Naive thymus-derived CD4-positive, alpha-beta T cell (primary cell): ENCODE measurements at regions of chr13 and their contacts with region 1.

Region 1: DNA sequence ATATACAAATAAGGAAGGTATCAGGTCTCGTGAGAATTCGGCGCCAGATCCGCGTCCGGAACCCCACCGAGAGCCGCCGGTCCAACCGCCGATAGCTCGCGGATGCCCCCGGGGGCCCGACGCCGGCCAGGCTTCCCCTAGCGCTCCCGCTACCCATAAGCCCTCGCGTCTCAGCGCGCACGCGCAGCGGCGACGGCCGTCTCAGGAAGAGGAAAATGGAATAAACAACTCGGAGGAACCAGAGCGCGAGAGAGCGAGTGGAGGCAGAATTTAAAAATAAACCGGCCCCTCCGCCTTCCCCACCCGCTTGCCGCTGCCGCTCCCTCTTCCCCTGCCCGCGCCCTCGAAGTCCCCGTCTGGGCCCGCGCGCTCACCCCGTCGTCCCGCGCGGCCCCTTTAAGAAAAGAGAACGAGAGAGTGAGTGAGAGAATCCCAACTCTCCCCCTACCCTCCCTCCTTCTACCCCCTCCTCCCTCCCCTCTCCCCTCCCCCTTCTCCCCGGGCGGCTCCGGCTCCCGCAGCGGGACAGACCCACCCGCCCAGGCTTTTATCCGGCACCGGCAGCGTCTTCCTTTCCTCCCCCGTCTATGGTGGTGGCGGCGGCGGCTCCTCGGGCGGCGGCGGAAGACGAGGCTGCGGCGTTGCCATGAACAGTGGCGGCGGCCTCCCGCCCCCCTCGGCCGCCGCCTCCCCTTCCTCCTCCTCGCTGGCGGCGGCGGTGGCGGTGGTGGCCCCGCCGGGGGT is at the start of gene PAN3:
- DNase-seq: peak; percentile 88 to 92 (median 91)
- ATAC-seq: peak; percentile 73
- H3K4me3 ChIP-seq: peak within 1 kb of the TSS; percentile 56
- H3K4me3 Mint-ChIP-seq: peak within 1 kb of the TSS; percentile 90 to 99 (median 96)
- H3K27ac ChIP-seq: peak within 1 kb of the TSS; percentile 99
- H3K27ac Mint-ChIP-seq: peak within 1 kb of the TSS; percentile 96 to 99 (median 98)
- H3K4me1 ChIP-seq: peaks cover 24% of the 10 kb centered on the region in 2 donors
- H3K4me1 Mint-ChIP-seq: peaks cover 43 to 52% (median 47%) of the 10 kb centered on the region in 7 donors
- H3K27me3 ChIP-seq: no peaks in the 10 kb centered on the region
- H3K27me3 Mint-ChIP-seq: peaks cover 0 to 2% (median 0%) of the 10 kb centered on the region in 5 donors
- total RNA-seq, gene PAN3: 49.9 to 82.5 (median 76.4) TPM

Region 2: DNA sequence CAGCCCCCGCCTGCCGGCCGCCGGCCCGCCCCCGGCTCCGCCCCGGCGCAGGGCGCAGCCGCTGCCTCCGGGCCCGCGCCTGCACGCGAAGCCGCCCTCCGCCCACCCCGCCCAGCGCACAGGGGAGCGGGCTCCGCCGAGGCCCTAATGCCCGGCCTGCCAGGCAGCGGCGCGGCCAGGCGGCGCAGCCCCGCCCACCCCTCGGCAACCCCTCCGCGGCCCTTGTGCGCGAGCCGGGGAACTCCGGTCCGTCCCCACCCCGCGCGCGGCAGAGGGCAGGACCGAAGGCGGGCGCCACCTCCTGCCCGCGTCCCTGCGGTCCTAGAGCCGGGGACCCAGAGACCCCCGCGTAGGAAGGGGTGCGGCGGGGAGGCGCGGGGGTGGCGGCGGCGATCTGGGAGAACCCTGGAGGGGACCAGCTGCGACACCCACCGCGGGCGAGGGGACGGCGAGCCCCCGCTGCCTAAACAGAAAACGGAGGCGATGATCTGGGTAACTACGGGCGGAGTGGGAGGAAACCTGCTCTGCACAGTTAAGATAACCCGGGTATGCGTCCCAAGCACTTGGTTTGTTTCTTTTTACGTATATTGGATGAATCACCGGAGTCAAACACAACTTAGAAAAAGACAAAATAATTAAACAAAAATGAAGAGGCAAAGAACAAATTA is 966.2 kb before region 1 on chr13:
- CTCF ChIA-PET with region 1: no interaction called
- POLR2A ChIA-PET with region 1: no interaction called
- intact Hi-C with region 1: loop called (anchors 2 kb)
- DNase-seq: peak; percentile 82 to 91 (median 88)
- ATAC-seq: peak; percentile 94
- H3K4me3 ChIP-seq: peak overlapping the region; percentile 58
- H3K4me3 Mint-ChIP-seq: peak overlapping the region; percentile 78 to 96 (median 88)
- H3K27ac ChIP-seq: peak overlapping the region; percentile 85
- H3K27ac Mint-ChIP-seq: peak overlapping the region; percentile 76 to 95 (median 88)
- H3K4me1 ChIP-seq: peaks cover 24 to 34% of the 10 kb centered on the region in 2 donors
- H3K4me1 Mint-ChIP-seq: peaks cover 23 to 49% (median 44%) of the 10 kb centered on the region in 7 donors
- H3K27me3 ChIP-seq: no peaks in the 10 kb centered on the region
- H3K27me3 Mint-ChIP-seq: no peaks in the 10 kb centered on the region

Region 3: GRCh38 chr13:27449936-27450828 is 688.0 kb before region 1 on chr13 and contains the start of gene MTIF3:
- CTCF ChIA-PET with region 1: no interaction called
- POLR2A ChIA-PET with region 1: interaction called, 3 read pairs
- intact Hi-C with region 1: loop called (anchors 1 kb)
- DNase-seq: peak; percentile 90 to 99 (median 98)
- ATAC-seq: peak; percentile 89
- H3K4me3 ChIP-seq: peak within 1 kb of the TSS; percentile 82
- H3K4me3 Mint-ChIP-seq: peak within 1 kb of the TSS; percentile 89 to 96 (median 94)
- H3K27ac ChIP-seq: peak within 1 kb of the TSS; percentile 96
- H3K27ac Mint-ChIP-seq: peak within 1 kb of the TSS; percentile 94 to 100 (median 98)
- H3K4me1 ChIP-seq: peaks cover 35 to 41% of the 10 kb centered on the region in 2 donors
- H3K4me1 Mint-ChIP-seq: peaks cover 45 to 75% (median 56%) of the 10 kb centered on the region in 7 donors
- H3K27me3 ChIP-seq: no peaks in the 10 kb centered on the region
- H3K27me3 Mint-ChIP-seq: no peaks in the 10 kb centered on the region
- total RNA-seq, gene MTIF3: 28.4 to 89.6 (median 51.3) TPM

Region 4: GRCh38 chr13:28166279-28166678 is 28.1 kb after region 1 on chr13:
- CTCF ChIA-PET with region 1: no interaction called
- POLR2A ChIA-PET with region 1: no interaction called
- intact Hi-C with region 1: no loop called
- DNase-seq: no peak
- ATAC-seq: no peak
- H3K4me3 ChIP-seq: no peak overlapping the region
- H3K4me3 Mint-ChIP-seq: peak overlapping the region in 4 of 10 donors; percentile 11 to 36 (median 32)
- H3K27ac ChIP-seq: no peak overlapping the region
- H3K27ac Mint-ChIP-seq: peak overlapping the region in 3 of 9 donors; percentile 27 to 51 (median 43)
- H3K4me1 ChIP-seq: peaks cover 0 to 3% of the 10 kb centered on the region in 2 donors
- H3K4me1 Mint-ChIP-seq: peaks cover 15 to 66% (median 55%) of the 10 kb centered on the region in 7 donors
- H3K27me3 ChIP-seq: no peaks in the 10 kb centered on the region
- H3K27me3 Mint-ChIP-seq: no peaks in the 10 kb centered on the region

Region 5: GRCh38 chr13:28181413-28181812 is 43.2 kb after region 1 on chr13:
- CTCF ChIA-PET with region 1: no interaction called
- POLR2A ChIA-PET with region 1: no interaction called
- intact Hi-C with region 1: loop called in 1 of 2 experiments (anchors 2 kb)
- DNase-seq: no peak
- ATAC-seq: no peak
- H3K4me3 ChIP-seq: no peak overlapping the region
- H3K4me3 Mint-ChIP-seq: peak overlapping the region in 1 of 10 donors; percentile 43
- H3K27ac ChIP-seq: no peak overlapping the region
- H3K27ac Mint-ChIP-seq: peak overlapping the region in 2 of 9 donors; percentile 17 to 47
- H3K4me1 ChIP-seq: peaks cover 0 to 6% of the 10 kb centered on the region in 2 donors
- H3K4me1 Mint-ChIP-seq: peaks cover 4 to 75% (median 56%) of the 10 kb centered on the region in 7 donors
- H3K27me3 ChIP-seq: no peaks in the 10 kb centered on the region
- H3K27me3 Mint-ChIP-seq: no peaks in the 10 kb centered on the region

Region 6: DNA sequence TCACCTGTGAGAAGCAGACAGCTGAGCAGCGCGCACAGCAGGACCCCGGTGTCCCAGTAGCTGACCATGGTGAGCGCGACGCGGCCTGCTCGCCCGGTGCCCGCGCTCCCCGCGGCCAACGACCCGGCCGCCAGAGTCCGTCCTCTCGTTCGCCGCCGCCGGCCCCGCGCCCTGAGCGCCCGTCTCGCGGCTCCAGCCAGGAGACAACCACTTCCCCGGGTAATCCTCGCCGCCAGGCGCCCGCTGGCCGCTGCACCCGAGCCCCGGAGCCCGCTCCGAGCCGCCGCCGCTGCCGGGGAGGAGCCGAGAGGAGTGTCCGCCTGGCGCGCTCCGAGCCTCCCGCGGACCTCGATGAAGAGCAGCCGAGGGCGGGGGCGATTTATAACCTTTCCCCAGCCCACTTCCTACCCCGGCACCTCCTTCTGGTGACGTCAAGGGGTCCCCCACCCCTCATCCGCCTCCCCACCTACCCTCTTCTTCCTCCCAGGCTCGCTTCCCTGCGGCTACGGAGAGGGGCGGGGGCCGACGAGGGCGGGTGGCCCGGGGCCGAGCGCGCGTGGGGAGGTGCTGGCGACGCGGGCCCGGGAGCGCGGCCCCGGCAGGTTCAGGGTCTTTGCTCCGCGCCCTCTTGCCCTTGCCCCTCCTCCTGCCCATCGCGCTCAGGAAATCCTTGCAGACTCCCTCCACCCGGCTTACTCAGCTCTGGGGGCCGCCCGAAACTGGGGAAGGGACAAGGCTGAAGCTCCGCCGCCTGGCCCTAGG is 356.8 kb after region 1 on chr13 and contains the start of gene FLT1:
- CTCF ChIA-PET with region 1: no interaction called
- POLR2A ChIA-PET with region 1: no interaction called
- intact Hi-C with region 1: loop called in 1 of 2 experiments (anchors 2 kb)
- DNase-seq: peak; percentile 27 to 65 (median 55)
- ATAC-seq: peak; percentile 39
- H3K4me3 ChIP-seq: peak within 1 kb of the TSS; percentile 44
- H3K4me3 Mint-ChIP-seq: peak within 1 kb of the TSS; percentile 23 to 85 (median 74)
- H3K27ac ChIP-seq: peak within 1 kb of the TSS; percentile 30
- H3K27ac Mint-ChIP-seq: peak within 1 kb of the TSS in 5 of 9 donors; percentile 28 to 76 (median 61)
- H3K4me1 ChIP-seq: peaks cover 0 to 13% of the 10 kb centered on the region in 2 donors
- H3K4me1 Mint-ChIP-seq: peaks cover 0 to 56% (median 37%) of the 10 kb centered on the region in 7 donors
- H3K27me3 ChIP-seq: no peaks in the 10 kb centered on the region
- H3K27me3 Mint-ChIP-seq: peaks cover 7 to 62% (median 52%) of the 10 kb centered on the region in 5 donors
- total RNA-seq, gene FLT1: 1.7 to 2.7 (median 2.3) TPM

Region 7: DNA sequence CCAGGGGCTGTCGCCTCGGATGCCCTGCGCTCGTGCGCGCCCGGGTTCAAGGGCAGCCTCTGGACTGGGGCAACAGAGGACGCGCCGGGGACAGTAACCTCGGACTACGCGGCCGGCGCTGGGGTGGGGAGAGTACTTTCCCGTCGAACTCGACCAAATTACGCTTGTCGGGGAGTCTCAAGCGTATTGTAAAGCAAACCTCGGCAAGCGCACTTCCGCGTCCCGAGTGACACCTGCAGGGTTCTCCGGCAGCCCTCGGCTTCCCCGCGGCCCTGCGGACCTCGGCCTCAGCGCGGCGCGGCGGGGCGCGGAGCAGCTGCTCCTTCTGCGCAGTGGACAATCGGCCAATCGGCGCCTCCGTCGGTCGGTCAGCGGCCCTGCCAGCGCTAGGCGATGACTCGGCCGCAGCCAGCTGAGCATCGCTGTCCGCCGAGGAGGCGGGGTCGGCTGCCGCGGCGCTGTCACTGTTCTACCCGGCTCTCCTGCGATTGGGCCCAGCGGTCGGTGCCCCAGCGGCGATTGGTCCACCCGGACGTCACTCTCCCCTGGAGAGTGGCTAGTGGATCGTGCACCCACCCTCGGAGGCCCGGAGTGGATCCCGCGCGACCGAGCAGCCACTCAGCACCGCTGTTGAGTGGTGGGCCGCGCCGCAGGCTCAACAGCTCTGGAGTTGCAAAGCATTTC is 580.5 kb after region 1 on chr13 and contains the start of gene SLC46A3:
- CTCF ChIA-PET with region 1: no interaction called
- POLR2A ChIA-PET with region 1: interaction called, 3 read pairs
- intact Hi-C with region 1: loop called (anchors 1 to 2 kb)
- DNase-seq: peak; percentile 94 to 97 (median 96)
- ATAC-seq: peak; percentile 99
- H3K4me3 ChIP-seq: peak within 1 kb of the TSS; percentile 81
- H3K4me3 Mint-ChIP-seq: peak within 1 kb of the TSS; percentile 89 to 97 (median 95)
- H3K27ac ChIP-seq: peak within 1 kb of the TSS; percentile 78
- H3K27ac Mint-ChIP-seq: peak within 1 kb of the TSS; percentile 90 to 97 (median 95)
- H3K4me1 ChIP-seq: peaks cover 11 to 14% of the 10 kb centered on the region in 2 donors
- H3K4me1 Mint-ChIP-seq: peaks cover 27 to 48% (median 38%) of the 10 kb centered on the region in 7 donors
- H3K27me3 ChIP-seq: no peaks in the 10 kb centered on the region
- H3K27me3 Mint-ChIP-seq: peaks cover 0 to 10% (median 0%) of the 10 kb centered on the region in 5 donors
- total RNA-seq, gene SLC46A3: 11.1 to 23.6 (median 12.0) TPM